B cell (primary cell): ENCODE measurements at regions of chr5 and their contacts with region 1.

Region 1: GRCh38 chr5:112757468-112758208 is 20.0 kb downstream of the APC start:
- DNase-seq: peak; percentile 76
- ATAC-seq: peak; percentile 77
- H3K4me3 ChIP-seq: no peak overlapping the region
- H3K4me3 Mint-ChIP-seq: no peak overlapping the region
- H3K27ac ChIP-seq: peak overlapping the region in 1 of 2 donors; percentile 11
- H3K27ac Mint-ChIP-seq: peak overlapping the region; percentile 33
- H3K4me1 ChIP-seq: no peaks in the 10 kb centered on the region
- H3K4me1 Mint-ChIP-seq: peaks cover 8% of the 10 kb centered on the region
- H3K27me3 ChIP-seq: no peaks in the 10 kb centered on the region
- H3K27me3 Mint-ChIP-seq: no peaks in the 10 kb centered on the region
- CTCF ChIP-seq: peak; percentile 90

Region 2: GRCh38 chr5:110769000-110769681 is 1988.5 kb before region 1 on chr5:
- CTCF ChIA-PET with region 1: no interaction called
- POLR2A ChIA-PET with region 1: no interaction called
- intact Hi-C with region 1: no loop called
- DNase-seq: no peak
- ATAC-seq: no peak
- H3K4me3 ChIP-seq: no peak overlapping the region
- H3K4me3 Mint-ChIP-seq: no peak overlapping the region
- H3K27ac ChIP-seq: no peak overlapping the region
- H3K27ac Mint-ChIP-seq: no peak overlapping the region
- H3K4me1 ChIP-seq: no peaks in the 10 kb centered on the region
- H3K4me1 Mint-ChIP-seq: no peaks in the 10 kb centered on the region
- H3K27me3 ChIP-seq: no peaks in the 10 kb centered on the region
- H3K27me3 Mint-ChIP-seq: peaks cover 3% of the 10 kb centered on the region
- CTCF ChIP-seq: no peak

Region 3: DNA sequence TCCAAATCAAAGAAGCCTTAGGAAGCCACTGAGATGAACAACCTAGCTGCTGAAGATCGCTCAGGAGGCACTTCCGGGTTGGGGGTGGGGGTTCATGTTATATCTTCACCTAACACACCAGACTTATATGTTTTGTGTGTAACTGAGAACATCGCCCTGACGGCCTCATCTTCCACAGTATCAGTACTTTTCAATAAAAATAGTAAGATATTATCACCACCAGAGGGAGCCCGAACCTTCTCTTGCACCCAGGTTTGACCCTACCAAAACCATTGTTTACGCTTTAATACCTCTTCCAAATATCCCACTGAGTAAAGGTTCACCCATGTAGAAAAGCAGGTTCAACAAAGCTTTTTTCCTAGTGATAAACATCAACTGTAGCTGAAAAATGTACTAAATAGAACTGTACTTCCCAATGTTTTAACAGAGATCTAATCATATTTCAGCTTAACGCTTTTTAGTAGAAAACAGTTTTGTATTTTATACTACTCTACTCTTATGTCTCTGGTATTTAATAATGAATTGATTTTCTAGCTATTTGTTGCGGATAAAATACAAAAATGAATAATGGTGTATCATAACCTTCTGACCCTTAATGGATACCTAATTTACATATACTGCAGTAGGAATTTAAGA is 582.6 kb before region 1 on chr5:
- CTCF ChIA-PET with region 1: interaction called, 87 read pairs
- POLR2A ChIA-PET with region 1: no interaction called
- intact Hi-C with region 1: loop called (anchors 1 kb)
- DNase-seq: peak; percentile 70
- ATAC-seq: peak; percentile 64
- H3K4me3 ChIP-seq: no peak overlapping the region
- H3K4me3 Mint-ChIP-seq: no peak overlapping the region
- H3K27ac ChIP-seq: no peak overlapping the region
- H3K27ac Mint-ChIP-seq: no peak overlapping the region
- H3K4me1 ChIP-seq: peaks cover 3% of the 10 kb centered on the region in 2 donors
- H3K4me1 Mint-ChIP-seq: peaks cover 4% of the 10 kb centered on the region
- H3K27me3 ChIP-seq: no peaks in the 10 kb centered on the region
- H3K27me3 Mint-ChIP-seq: no peaks in the 10 kb centered on the region
- CTCF ChIP-seq: peak; percentile 86

Region 4: GRCh38 chr5:112529525-112529924 is 228.1 kb before region 1 on chr5:
- CTCF ChIA-PET with region 1: interaction called, 10 read pairs
- POLR2A ChIA-PET with region 1: no interaction called
- intact Hi-C with region 1: no loop called
- DNase-seq: peak; percentile 56
- ATAC-seq: no peak
- H3K4me3 ChIP-seq: no peak overlapping the region
- H3K4me3 Mint-ChIP-seq: no peak overlapping the region
- H3K27ac ChIP-seq: peak overlapping the region in 1 of 2 donors; percentile 61
- H3K27ac Mint-ChIP-seq: peak overlapping the region; percentile 85
- H3K4me1 ChIP-seq: peaks cover 81 to 83% of the 10 kb centered on the region in 2 donors
- H3K4me1 Mint-ChIP-seq: peaks cover 93% of the 10 kb centered on the region
- H3K27me3 ChIP-seq: no peaks in the 10 kb centered on the region
- H3K27me3 Mint-ChIP-seq: no peaks in the 10 kb centered on the region
- CTCF ChIP-seq: peak; percentile 66

Region 5: DNA sequence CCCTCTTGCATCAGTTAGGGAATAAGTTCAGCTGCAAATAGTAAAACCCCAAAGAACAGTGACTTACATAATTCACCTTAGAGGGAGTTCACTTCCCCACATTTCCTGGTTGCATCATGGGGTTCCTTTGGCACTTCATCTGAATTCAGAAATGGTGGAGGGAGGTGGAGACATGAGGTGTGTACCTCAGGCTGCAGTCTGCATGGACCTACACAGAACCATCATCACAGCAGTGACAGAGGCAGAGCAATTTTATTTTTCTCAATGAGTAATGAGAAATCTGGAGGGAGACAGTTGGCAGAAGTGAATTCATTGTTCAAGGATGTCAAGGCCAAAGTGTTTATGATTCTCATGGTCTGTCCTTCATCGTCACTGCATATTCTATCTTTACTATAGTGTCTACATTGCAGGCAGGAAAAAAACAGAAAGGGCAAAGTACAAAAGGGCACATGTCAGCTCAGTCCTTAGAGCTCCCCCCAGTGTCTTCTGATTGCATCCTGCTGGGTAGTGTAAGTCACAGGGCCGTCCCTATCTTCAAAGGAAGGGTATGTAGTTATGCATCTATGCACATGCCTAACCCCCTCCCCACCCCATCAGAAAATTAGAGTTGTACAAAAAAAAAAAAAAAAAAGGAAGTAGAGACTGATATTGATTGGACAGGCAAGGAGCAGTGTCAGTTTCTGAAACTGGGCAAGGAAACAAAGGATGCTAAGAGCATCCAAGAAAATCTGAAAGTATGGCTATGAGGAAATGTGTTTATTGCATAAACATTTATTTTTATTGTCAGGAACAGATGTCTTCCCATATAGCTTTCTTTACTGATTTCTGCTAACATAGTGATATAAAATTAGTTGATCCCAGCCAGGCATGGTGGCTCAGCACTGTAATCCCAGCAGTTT is 152.7 kb before region 1 on chr5:
- CTCF ChIA-PET with region 1: interaction called, 12 read pairs
- POLR2A ChIA-PET with region 1: no interaction called
- intact Hi-C with region 1: loop called (anchors 1 kb)
- DNase-seq: peak; percentile 59
- ATAC-seq: peak; percentile 91
- H3K4me3 ChIP-seq: no peak overlapping the region
- H3K4me3 Mint-ChIP-seq: no peak overlapping the region
- H3K27ac ChIP-seq: no peak overlapping the region
- H3K27ac Mint-ChIP-seq: no peak overlapping the region
- H3K4me1 ChIP-seq: peaks cover 3 to 6% of the 10 kb centered on the region in 2 donors
- H3K4me1 Mint-ChIP-seq: peaks cover 9% of the 10 kb centered on the region
- H3K27me3 ChIP-seq: peaks cover 0 to 6% (median 0%) of the 10 kb centered on the region in 4 experiments
- H3K27me3 Mint-ChIP-seq: no peaks in the 10 kb centered on the region
- CTCF ChIP-seq: peak; percentile 26

Region 6: DNA sequence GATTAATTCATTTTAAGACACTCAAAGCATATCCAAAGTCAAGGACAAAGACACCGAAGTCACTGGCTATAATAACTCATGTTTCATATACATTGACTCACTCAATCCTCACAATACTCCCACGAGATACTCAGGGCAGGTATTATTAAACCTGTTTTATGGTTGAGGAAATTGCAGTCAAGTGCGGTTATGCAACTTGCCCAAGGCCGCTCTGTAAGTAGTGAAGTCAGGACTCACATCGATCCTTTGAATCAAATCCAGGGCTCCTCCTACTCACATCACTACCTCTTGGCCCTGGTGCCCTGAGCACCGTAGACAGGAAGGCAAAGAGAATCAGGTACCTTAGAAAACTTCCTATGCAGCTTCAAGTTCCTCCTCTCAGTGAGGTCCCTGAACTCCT is 107.8 kb before region 1 on chr5:
- CTCF ChIA-PET with region 1: no interaction called
- POLR2A ChIA-PET with region 1: no interaction called
- intact Hi-C with region 1: no loop called
- DNase-seq: no peak
- ATAC-seq: no peak
- H3K4me3 ChIP-seq: no peak overlapping the region
- H3K4me3 Mint-ChIP-seq: no peak overlapping the region
- H3K27ac ChIP-seq: no peak overlapping the region
- H3K27ac Mint-ChIP-seq: no peak overlapping the region
- H3K4me1 ChIP-seq: no peaks in the 10 kb centered on the region
- H3K4me1 Mint-ChIP-seq: no peaks in the 10 kb centered on the region
- H3K27me3 ChIP-seq: peaks cover 0 to 2% (median 0%) of the 10 kb centered on the region in 4 experiments
- H3K27me3 Mint-ChIP-seq: peaks cover 12% of the 10 kb centered on the region
- CTCF ChIP-seq: no peak

Region 7: GRCh38 chr5:112737463-112738190 is 20.0 kb before region 1 on chr5 and contains the start of gene APC:
- CTCF ChIA-PET with region 1: interaction called, 13 read pairs
- POLR2A ChIA-PET with region 1: no interaction called
- intact Hi-C with region 1: no loop called
- DNase-seq: peak; percentile 82
- ATAC-seq: peak; percentile 93
- H3K4me3 ChIP-seq: peak within 1 kb of the TSS; percentile 61 to 93 (median 71)
- H3K4me3 Mint-ChIP-seq: peak within 1 kb of the TSS; percentile 98
- H3K27ac ChIP-seq: peak within 1 kb of the TSS in 1 of 2 donors; percentile 52
- H3K27ac Mint-ChIP-seq: peak within 1 kb of the TSS; percentile 83
- H3K4me1 ChIP-seq: peaks cover 7 to 12% of the 10 kb centered on the region in 2 donors
- H3K4me1 Mint-ChIP-seq: peaks cover 26% of the 10 kb centered on the region
- H3K27me3 ChIP-seq: no peaks in the 10 kb centered on the region
- H3K27me3 Mint-ChIP-seq: no peaks in the 10 kb centered on the region
- CTCF ChIP-seq: no peak
- total RNA-seq, gene APC: 55.8 and 60.3 TPM in 2 replicates

Region 8: DNA sequence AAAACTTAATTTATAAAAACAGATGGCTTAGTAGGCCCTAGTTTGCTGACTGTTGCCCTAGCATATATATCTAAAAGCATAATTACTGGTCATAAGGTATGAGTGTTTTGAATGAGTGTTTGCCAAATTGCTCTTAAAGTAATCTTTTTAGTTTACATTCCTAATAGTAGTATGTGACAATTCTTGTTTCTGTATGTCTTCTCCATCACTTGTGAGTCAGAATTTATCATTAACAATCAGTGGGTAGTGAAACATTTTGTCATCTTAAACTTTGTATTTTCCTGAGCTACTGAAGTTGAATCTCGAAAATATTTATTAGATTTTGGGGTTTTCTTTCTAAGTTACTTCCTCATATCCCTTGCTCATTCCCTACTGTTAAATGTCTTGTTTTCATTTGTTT is 29.6 kb after region 1 on chr5:
- CTCF ChIA-PET with region 1: no interaction called
- POLR2A ChIA-PET with region 1: no interaction called
- intact Hi-C with region 1: no loop called
- DNase-seq: no peak
- ATAC-seq: no peak
- H3K4me3 ChIP-seq: no peak overlapping the region
- H3K4me3 Mint-ChIP-seq: no peak overlapping the region
- H3K27ac ChIP-seq: no peak overlapping the region
- H3K27ac Mint-ChIP-seq: no peak overlapping the region
- H3K4me1 ChIP-seq: no peaks in the 10 kb centered on the region
- H3K4me1 Mint-ChIP-seq: no peaks in the 10 kb centered on the region
- H3K27me3 ChIP-seq: no peaks in the 10 kb centered on the region
- H3K27me3 Mint-ChIP-seq: no peaks in the 10 kb centered on the region
- CTCF ChIP-seq: no peak